Pancreas (tissue), 10 donors: ENCODE measurements at regions of chr9 and their contacts with region 1.

Region 1: GRCh38 chr9:21395778-21396717 is 10.8 kb upstream of the IFNA2 start:
- DNase-seq: peak in 5 of 6 donors; percentile 44 to 79 (median 48)
- ATAC-seq: peak; percentile 70 to 91 (median 86)
- H3K4me3 ChIP-seq: peak overlapping the region in 2 of 4 donors; percentile 27 to 42
- H3K27ac ChIP-seq: no peak overlapping the region
- H3K4me1 ChIP-seq: no peaks in the 10 kb centered on the region
- H3K27me3 ChIP-seq: peaks cover 0 to 36% (median 0%) of the 10 kb centered on the region in 4 donors
- CTCF ChIP-seq: peak; percentile 49 to 73 (median 68)

Region 2: DNA sequence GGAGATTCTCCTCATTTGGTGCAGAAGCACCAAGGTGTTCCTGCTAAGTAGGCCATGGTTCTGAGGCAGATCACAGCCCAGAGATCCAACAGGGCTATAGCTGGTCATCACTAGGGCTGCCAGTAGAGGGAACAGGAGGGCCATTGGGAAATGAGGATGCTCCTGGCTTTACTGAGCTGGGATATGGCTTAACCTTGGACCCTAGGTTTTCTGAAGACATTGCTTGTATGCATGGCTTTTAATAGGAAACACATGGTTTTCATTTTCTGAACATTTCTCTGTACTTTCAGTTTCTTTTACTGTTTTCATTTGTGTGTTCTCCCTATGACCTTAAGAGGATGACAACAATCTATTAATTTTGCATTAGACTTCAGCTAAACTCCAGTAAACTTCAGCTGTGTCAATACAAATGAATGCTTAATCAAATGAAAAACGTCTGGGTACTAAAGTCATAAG is 254.6 kb before region 1 on chr9 and contains the start of gene IFNW1:
- intact Hi-C with region 1: no loop called
- DNase-seq: no peak
- ATAC-seq: no peak
- H3K4me3 ChIP-seq: no peak within 1 kb of the TSS
- H3K27ac ChIP-seq: no peak within 1 kb of the TSS
- H3K4me1 ChIP-seq: no peaks in the 10 kb centered on the region
- H3K27me3 ChIP-seq: no peaks in the 10 kb centered on the region
- CTCF ChIP-seq: no peak
- total RNA-seq, gene IFNW1: not detected

Region 3: GRCh38 chr9:21326526-21327139 is 69.4 kb before region 1 on chr9:
- intact Hi-C with region 1: loop called in 1 of 3 experiments (anchors 10 kb)
- DNase-seq: no peak
- ATAC-seq: peak in 3 of 4 donors; percentile 84 to 90 (median 90)
- H3K4me3 ChIP-seq: no peak overlapping the region
- H3K27ac ChIP-seq: no peak overlapping the region
- H3K4me1 ChIP-seq: peaks cover 7 to 26% (median 22%) of the 10 kb centered on the region in 3 donors
- H3K27me3 ChIP-seq: no peaks in the 10 kb centered on the region
- CTCF ChIP-seq: peak; percentile 8 to 54 (median 44)

Region 4: DNA sequence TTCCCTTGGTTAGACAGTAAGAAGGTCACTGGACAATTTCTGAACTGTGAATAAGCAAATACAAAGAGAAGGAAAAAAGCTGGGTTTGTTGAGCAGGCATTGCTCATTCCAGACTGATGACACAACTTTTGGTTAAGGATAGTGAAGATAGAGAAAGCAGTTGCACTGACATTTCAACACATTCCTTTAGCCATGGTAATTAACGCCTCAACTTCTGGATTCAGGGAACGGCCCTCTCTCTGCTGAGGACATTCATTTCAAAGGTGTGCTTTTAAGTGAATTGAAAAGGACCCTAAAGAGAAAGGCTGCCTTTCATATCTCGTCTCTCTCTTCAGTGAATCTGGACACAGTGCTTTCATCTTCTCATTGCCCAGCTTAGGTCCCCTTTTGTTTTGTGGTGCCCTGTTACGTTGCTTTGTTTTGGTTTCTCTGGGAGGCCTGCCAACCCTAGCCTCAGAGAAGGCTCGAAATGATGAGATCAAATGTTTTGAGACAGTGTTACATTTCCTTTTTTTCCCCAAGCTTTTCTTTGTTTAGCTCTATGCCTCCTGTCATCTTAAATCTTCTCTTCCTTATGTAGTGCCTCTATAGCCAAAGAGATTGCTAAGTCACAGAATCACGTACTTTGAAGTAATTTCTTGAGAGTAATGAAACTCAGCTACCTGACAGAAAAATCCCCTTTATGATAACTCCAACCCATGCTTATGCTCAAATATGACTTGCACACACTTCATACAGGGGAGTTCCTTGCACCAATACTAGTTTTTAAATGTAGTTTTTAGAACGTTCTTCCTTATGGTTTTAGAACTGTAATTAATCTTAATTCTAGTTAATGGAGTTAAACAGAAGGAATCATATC is 180.5 kb after region 1 on chr9:
- intact Hi-C with region 1: loop called in 1 of 3 experiments (anchors 10 kb)
- DNase-seq: no peak
- ATAC-seq: peak in 2 of 4 donors; percentile 46 to 71
- H3K4me3 ChIP-seq: no peak overlapping the region
- H3K27ac ChIP-seq: no peak overlapping the region
- H3K4me1 ChIP-seq: no peaks in the 10 kb centered on the region
- H3K27me3 ChIP-seq: peaks cover 0 to 2% (median 0%) of the 10 kb centered on the region in 4 donors
- CTCF ChIP-seq: no peak